ENCODE measurements at regions of chr16 and their contacts with region 1.

Region 1: GRCh38 chr16:29825145-29826044 is 5.1 kb downstream of the MVP start:
- DNase-seq: peak in 6 of 9 donors; percentile 36 to 52 (median 43)
- ATAC-seq: no peak
- H3K4me3 ChIP-seq: peak overlapping the region; percentile 44
- H3K4me3 Mint-ChIP-seq: peak overlapping the region; percentile 70 to 95 (median 86)
- H3K27ac ChIP-seq: peak overlapping the region; percentile 72
- H3K27ac Mint-ChIP-seq: peak overlapping the region; percentile 56 to 99 (median 96)
- H3K4me1 ChIP-seq: peaks cover 61 to 81% of the 10 kb centered on the region in 2 donors
- H3K4me1 Mint-ChIP-seq: peaks cover 39 to 97% (median 57%) of the 10 kb centered on the region in 7 donors
- H3K27me3 ChIP-seq: no peaks in the 10 kb centered on the region
- H3K27me3 Mint-ChIP-seq: no peaks in the 10 kb centered on the region

Region 2: GRCh38 chr16:29775742-29776408 is 49.5 kb before region 1 on chr16:
- CTCF ChIA-PET with region 1: no interaction called
- POLR2A ChIA-PET with region 1: no interaction called
- intact Hi-C with region 1: no loop called
- DNase-seq: no peak
- ATAC-seq: no peak
- H3K4me3 ChIP-seq: no peak overlapping the region
- H3K4me3 Mint-ChIP-seq: no peak overlapping the region
- H3K27ac ChIP-seq: no peak overlapping the region
- H3K27ac Mint-ChIP-seq: no peak overlapping the region
- H3K4me1 ChIP-seq: no peaks in the 10 kb centered on the region
- H3K4me1 Mint-ChIP-seq: peaks cover under 1 to 17% (median 13%) of the 10 kb centered on the region in 7 donors
- H3K27me3 ChIP-seq: no peaks in the 10 kb centered on the region
- H3K27me3 Mint-ChIP-seq: peaks cover 0 to 22% (median 0%) of the 10 kb centered on the region in 5 donors

Region 3: GRCh38 chr16:29836623-29837022 is 11.2 kb after region 1 on chr16:
- CTCF ChIA-PET with region 1: interaction called, 3 read pairs
- POLR2A ChIA-PET with region 1: interaction called, 13 read pairs
- intact Hi-C with region 1: no loop called
- DNase-seq: no peak
- ATAC-seq: no peak
- H3K4me3 ChIP-seq: no peak overlapping the region
- H3K4me3 Mint-ChIP-seq: no peak overlapping the region
- H3K27ac ChIP-seq: no peak overlapping the region
- H3K27ac Mint-ChIP-seq: peak overlapping the region in 1 of 9 donors; percentile 28
- H3K4me1 ChIP-seq: no peaks in the 10 kb centered on the region
- H3K4me1 Mint-ChIP-seq: peaks cover 0 to 9% (median 5%) of the 10 kb centered on the region in 7 donors
- H3K27me3 ChIP-seq: no peaks in the 10 kb centered on the region
- H3K27me3 Mint-ChIP-seq: no peaks in the 10 kb centered on the region

Region 4: GRCh38 chr16:29842732-29843346 is 17.4 kb after region 1 on chr16:
- CTCF ChIA-PET with region 1: interaction called, 108 read pairs
- POLR2A ChIA-PET with region 1: interaction called, 40 read pairs
- intact Hi-C with region 1: loop called (anchors 1 kb)
- DNase-seq: no peak
- ATAC-seq: no peak
- H3K4me3 ChIP-seq: no peak overlapping the region
- H3K4me3 Mint-ChIP-seq: no peak overlapping the region
- H3K27ac ChIP-seq: no peak overlapping the region
- H3K27ac Mint-ChIP-seq: peak overlapping the region; percentile 5 to 78 (median 53)
- H3K4me1 ChIP-seq: no peaks in the 10 kb centered on the region
- H3K4me1 Mint-ChIP-seq: peaks cover 0 to 8% (median 3%) of the 10 kb centered on the region in 7 donors
- H3K27me3 ChIP-seq: no peaks in the 10 kb centered on the region
- H3K27me3 Mint-ChIP-seq: no peaks in the 10 kb centered on the region